Prostate gland (tissue), 2 donors: ENCODE measurements at regions of chr2 and their contacts with region 1.

Region 1: DNA sequence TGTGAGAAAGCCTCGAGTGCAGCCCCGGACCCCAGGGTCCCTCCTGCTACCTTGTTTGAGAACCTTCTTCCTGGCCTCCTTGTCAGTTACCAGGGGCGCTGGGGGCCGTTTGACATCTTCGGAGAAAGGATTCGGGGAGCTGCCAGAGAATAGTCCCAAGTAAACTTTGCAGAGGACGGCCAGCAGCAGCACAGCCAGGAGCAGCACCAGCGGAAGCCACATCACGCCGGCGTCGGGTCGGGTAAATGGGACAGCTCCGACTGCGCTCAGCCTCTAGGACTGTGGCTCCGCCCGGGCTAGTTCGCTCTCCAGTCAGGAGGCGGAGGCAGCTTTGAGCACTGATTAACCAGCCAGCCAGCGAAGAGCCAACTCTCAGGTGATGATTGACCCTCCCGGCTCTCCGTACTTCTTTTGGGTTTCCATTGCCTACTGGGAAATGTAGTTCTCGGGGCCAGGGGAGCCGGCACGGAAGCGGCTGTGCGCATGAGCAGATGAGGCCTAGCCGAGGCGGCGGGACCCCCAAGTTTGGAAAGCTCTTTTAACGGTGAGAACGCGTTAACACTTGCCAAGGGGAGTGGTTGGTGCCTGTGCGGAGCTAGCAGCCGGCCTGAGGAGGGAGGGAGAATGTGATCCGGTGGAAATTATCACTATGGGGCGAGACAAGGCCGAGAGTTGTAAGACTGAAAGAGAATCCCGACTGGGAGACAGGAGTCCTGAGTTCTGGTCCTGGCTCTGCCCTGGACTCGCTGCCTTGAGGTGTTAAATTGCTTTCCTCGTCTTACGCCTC is at the starts of genes ELMOD3 and RETSAT:
- DNase-seq: peak; percentile 99
- H3K4me3 ChIP-seq: peak within 1 kb of the TSS; percentile 54 to 73
- H3K27ac ChIP-seq: peak within 1 kb of the TSS; percentile 76 to 79
- H3K4me1 ChIP-seq: no peaks in the 10 kb centered on the region
- H3K27me3 ChIP-seq: no peaks in the 10 kb centered on the region
- CTCF ChIP-seq: peak in 2 of 4 experiments; percentile 42 to 49
- POLR2A ChIP-seq: peak; percentile 95
- total RNA-seq, gene ELMOD3: 31.6 to 32.1 TPM
- total RNA-seq, gene RETSAT: 51.1 to 72.6 TPM

Region 2: GRCh38 chr2:85327822-85328617 is 26.5 kb before region 1 on chr2 and contains the start of gene TGOLN2:
- intact Hi-C with region 1: loop called (anchors 1 kb)
- DNase-seq: peak; percentile 90
- H3K4me3 ChIP-seq: peak within 1 kb of the TSS; percentile 50 to 87
- H3K27ac ChIP-seq: peak within 1 kb of the TSS; percentile 92 to 97
- H3K4me1 ChIP-seq: peaks cover 5% of the 10 kb centered on the region
- H3K27me3 ChIP-seq: no peaks in the 10 kb centered on the region
- CTCF ChIP-seq: peak in 1 of 4 experiments; percentile 42
- POLR2A ChIP-seq: peak; percentile 97
- total RNA-seq, gene TGOLN2: 140 to 165 TPM

Region 3: GRCh38 chr2:85662899-85663593 is 308.6 kb after region 1 on chr2:
- intact Hi-C with region 1: no loop called
- DNase-seq: no peak
- H3K4me3 ChIP-seq: no peak overlapping the region
- H3K27ac ChIP-seq: no peak overlapping the region
- H3K4me1 ChIP-seq: no peaks in the 10 kb centered on the region
- H3K27me3 ChIP-seq: no peaks in the 10 kb centered on the region
- CTCF ChIP-seq: no peak
- POLR2A ChIP-seq: no peak